ENCODE measurements at regions of chr17 and their contacts with region 1.

Region 1: DNA sequence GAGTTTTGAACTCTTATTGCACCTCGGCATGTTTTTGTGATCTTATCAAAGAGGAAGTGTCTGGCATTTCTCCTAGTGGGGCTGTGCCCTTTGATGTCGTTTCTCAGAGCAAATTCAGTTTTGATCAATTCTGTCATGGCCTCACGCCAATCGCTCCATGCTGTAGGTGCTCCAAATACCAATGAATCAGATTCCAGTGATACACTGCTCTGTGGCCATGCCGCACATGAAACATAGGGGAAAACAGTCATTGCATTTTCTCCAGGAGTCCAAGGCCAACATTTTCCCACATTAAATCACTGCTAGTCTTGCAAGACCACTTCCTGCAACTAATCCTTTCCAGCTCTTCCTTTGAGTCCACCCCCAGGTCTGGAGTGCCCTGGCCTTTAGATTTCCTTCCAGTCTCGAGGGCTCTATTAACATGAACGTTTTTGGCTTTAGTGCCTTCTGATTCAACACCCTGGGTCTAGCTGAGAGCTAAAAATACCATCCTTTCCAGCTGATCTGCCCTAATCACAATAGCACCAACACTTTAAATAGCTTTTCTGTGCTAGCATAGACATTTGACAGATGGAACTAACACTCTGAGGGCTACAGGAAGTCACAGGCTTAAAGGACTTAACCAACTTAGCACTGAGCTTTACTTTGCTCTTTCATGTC is 18.2 kb upstream of the RASL10B start:
- DNase-seq: peak; percentile 94
- ATAC-seq: peak; percentile 51
- H3K4me3 ChIP-seq: no peak overlapping the region
- H3K27ac ChIP-seq: no peak overlapping the region
- H3K4me1 ChIP-seq: peaks cover 7% of the 10 kb centered on the region
- H3K27me3 ChIP-seq: no peaks in the 10 kb centered on the region
- CTCF ChIP-seq: no peak
- POLR2A ChIP-seq: no peak
- RAD21 ChIP-seq: 0 out of 2 replicates have a peak, but pooled peaks have one; percentile 0

Region 2: GRCh38 chr17:35679007-35679682 is 34.1 kb before region 1 on chr17:
- CTCF ChIA-PET with region 1: no interaction called
- POLR2A ChIA-PET with region 1: interaction called, 6 read pairs
- dilution Hi-C with region 1: no loop called
- in situ Hi-C with region 1: no loop called
- intact Hi-C with region 1: loop called (anchors 5 kb)
- DNase-seq: no peak
- ATAC-seq: no peak
- H3K4me3 ChIP-seq: no peak overlapping the region
- H3K27ac ChIP-seq: no peak overlapping the region
- H3K4me1 ChIP-seq: no peaks in the 10 kb centered on the region
- H3K27me3 ChIP-seq: no peaks in the 10 kb centered on the region
- CTCF ChIP-seq: no peak
- POLR2A ChIP-seq: no peak
- RAD21 ChIP-seq: no peak

Region 3: DNA sequence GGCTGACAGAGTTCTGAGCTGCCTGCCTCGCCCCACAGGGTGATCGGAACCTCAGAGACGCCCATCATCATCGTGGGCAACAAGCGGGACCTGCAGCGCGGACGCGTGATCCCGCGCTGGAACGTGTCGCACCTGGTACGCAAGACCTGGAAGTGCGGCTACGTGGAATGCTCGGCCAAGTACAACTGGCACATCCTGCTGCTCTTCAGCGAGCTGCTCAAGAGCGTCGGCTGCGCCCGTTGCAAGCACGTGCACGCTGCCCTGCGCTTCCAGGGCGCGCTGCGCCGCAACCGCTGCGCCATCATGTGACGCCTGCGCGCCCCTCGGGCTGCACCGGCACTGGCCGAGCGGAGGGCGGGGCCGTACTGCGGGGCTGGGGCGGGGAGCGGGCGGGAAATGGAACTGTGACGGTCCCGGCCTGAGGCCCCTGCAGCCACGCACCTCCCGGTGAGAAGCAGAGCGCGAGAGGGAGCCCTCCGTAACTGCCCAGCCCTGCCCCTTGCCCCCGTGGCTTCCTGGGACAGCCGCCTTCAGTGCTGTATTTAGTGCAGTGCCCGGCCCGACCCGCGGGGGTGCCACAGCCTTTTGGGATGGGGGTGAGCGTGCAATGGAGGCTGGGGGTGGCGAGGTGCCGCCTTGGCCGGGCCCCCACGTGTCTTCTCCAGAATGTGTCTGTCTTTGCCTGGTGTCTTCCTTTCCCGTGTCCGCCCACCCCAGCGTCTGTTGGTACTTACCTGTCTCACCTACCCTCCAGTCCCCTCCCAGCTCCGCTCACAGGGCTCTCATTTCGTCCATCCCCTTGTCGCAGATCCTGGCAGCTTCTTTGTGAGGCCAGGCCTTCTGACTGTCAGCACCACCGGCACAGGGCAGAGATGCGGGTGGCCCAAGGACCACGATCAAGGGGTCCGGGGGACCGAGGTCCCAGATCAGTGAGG is 28.1 kb after region 1 on chr17:
- CTCF ChIA-PET with region 1: no interaction called
- POLR2A ChIA-PET with region 1: no interaction called
- dilution Hi-C with region 1: no loop called
- in situ Hi-C with region 1: no loop called
- intact Hi-C with region 1: no loop called
- DNase-seq: no peak
- ATAC-seq: peak; percentile 48; the same call in 1 of the 2 replicates
- H3K4me3 ChIP-seq: no peak overlapping the region
- H3K27ac ChIP-seq: no peak overlapping the region
- H3K4me1 ChIP-seq: no peaks in the 10 kb centered on the region
- H3K27me3 ChIP-seq: peaks cover 43% of the 10 kb centered on the region
- CTCF ChIP-seq: no peak
- POLR2A ChIP-seq: no peak
- RAD21 ChIP-seq: no peak

Region 4: GRCh38 chr17:35930211-35931065 is 217.2 kb after region 1 on chr17 and contains the start of gene RDM1:
- CTCF ChIA-PET with region 1: no interaction called
- POLR2A ChIA-PET with region 1: no interaction called
- dilution Hi-C with region 1: no loop called
- in situ Hi-C with region 1: no loop called
- intact Hi-C with region 1: no loop called
- DNase-seq: peak; percentile 34
- ATAC-seq: peak; percentile 93
- H3K4me3 ChIP-seq: peak within 1 kb of the TSS; percentile 48
- H3K27ac ChIP-seq: no peak within 1 kb of the TSS
- H3K4me1 ChIP-seq: no peaks in the 10 kb centered on the region
- H3K27me3 ChIP-seq: peaks cover 3% of the 10 kb centered on the region
- CTCF ChIP-seq: no peak
- POLR2A ChIP-seq: no peak
- RAD21 ChIP-seq: no peak
- total RNA-seq, gene RDM1: 0.18 TPM in 1 of 2 replicates, not detected in the other